Activated CD4-positive, alpha-beta memory T cell treated with anti-CD3 and anti-CD28 coated beads for 36 hours (primary cell): ENCODE measurements at regions of chrX and their contacts with region 1.

Region 1: DNA sequence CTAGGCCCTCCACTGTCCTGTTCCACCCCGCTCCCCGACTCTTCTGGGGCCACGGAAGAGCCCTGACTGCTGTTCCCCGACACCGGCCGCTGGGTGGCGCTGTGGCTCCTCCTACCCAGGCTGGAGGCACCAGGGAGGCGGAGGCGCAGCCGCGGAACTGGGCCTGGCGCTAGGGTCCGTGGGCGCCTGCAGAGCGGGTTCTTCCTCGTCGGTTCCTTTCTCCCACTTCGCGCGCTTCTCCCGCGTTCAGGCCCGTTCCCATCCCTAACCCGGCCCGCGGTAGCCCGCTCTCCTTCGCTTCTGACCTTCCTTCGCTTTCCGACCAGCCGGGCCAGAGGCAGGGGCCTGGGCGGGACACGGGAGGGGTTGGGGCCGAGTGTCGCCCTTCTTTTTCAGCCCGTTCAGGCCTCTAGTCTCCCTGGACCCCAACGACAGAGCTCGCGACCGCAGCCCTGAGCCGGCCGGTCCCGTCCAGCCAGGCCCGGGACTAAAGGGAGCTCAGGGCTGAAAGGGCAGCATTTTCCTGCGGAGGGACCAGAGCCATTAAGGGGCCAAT is 34.3 kb downstream of the NALF2 start:
- DNase-seq: peak; percentile 78
- H3K4me3 Mint-ChIP-seq: peak overlapping the region; percentile 35
- H3K27ac Mint-ChIP-seq: no peak overlapping the region
- H3K4me1 Mint-ChIP-seq: peaks cover 17% of the 10 kb centered on the region
- H3K27me3 Mint-ChIP-seq: peaks cover 1% of the 10 kb centered on the region

Region 2: DNA sequence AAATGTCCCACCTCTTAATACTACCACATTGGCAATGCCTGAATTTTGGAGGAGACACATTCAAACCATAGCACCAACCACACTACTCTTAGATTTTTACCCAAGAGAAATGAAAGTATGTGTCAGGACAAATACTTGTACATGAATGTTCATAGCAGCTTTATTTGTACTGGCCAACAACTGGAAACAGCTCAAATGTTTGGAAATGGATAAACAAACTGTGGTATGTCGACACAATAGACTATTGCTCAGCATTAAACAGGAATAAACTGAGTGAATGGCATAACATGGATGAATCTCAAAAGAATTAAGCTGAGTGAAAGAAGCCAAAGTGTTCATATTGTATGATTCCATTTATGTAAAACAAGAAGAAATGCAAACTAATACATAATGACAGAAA is 59.0 kb after region 1 on chrX:
- CTCF ChIA-PET with region 1: no interaction called
- POLR2A ChIA-PET with region 1: no interaction called
- intact Hi-C with region 1: no loop called
- DNase-seq: no peak
- H3K4me3 Mint-ChIP-seq: no peak overlapping the region
- H3K27ac Mint-ChIP-seq: no peak overlapping the region
- H3K4me1 Mint-ChIP-seq: no peaks in the 10 kb centered on the region
- H3K27me3 Mint-ChIP-seq: peaks cover 3% of the 10 kb centered on the region

Region 3: GRCh38 chrX:70030301-70030767 is 491.9 kb after region 1 on chrX:
- CTCF ChIA-PET with region 1: interaction called, 25 read pairs
- POLR2A ChIA-PET with region 1: interaction called, 3 read pairs
- intact Hi-C with region 1: loop called (anchors 1 kb)
- DNase-seq: peak; percentile 51
- H3K4me3 Mint-ChIP-seq: no peak overlapping the region
- H3K27ac Mint-ChIP-seq: no peak overlapping the region
- H3K4me1 Mint-ChIP-seq: peaks cover 23% of the 10 kb centered on the region
- H3K27me3 Mint-ChIP-seq: no peaks in the 10 kb centered on the region